Activated CD8-positive, alpha-beta T cell treated with anti-CD3 and anti-CD28 coated beads, Interleukin-2, amount 10 ng/mL, durations not matched to agents 7 days and 5 days (primary cell): ENCODE measurements at regions of chr2 and their contacts with region 1.

Region 1: DNA sequence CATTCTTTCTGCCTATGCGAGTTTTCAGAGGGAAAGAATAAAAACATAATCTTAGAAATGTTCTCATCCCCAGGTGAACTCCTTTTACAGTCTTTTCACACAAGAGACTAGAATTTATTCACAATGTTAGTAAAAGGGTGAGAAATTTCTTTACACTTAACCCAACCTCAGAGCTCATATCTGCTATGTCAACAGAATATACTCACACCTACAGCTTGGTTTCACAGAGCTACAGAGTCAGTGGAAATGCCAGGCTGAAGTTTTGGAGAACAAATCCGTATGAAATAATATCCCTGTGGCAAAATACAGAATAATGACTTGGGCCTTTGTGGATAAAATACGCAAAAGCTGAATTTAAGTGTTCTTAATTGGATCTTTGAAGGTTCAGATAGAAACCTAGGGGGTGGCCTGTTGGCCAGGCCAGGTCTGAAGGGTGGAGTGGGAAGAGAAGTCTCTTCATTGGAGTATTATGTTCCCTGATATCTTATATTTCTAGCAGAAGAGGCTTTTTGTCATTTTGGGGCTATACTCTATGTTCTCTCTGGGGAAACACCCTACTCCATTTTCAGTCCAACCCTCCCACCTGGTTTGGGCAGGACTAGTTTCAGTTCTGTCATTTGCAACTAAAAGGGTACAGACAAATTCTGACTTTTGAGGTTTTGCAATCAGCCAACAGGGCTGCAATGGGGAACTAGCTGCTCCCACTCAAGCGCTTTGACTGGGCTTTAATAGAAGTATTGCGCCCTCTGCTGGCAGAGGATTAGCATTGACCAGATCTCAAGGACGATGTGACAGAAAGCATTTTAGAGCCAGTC is 25.7 kb downstream of the FBXO48 start:
- DNase-seq: peak; percentile 91
- ATAC-seq: peak; percentile 95
- H3K4me3 Mint-ChIP-seq: no peak overlapping the region
- H3K27ac Mint-ChIP-seq: peak overlapping the region; percentile 18
- H3K4me1 Mint-ChIP-seq: peaks cover 10% of the 10 kb centered on the region
- H3K27me3 Mint-ChIP-seq: peaks cover 10% of the 10 kb centered on the region

Region 2: GRCh38 chr2:68167186-68167585 is 274.2 kb before region 1 on chr2:
- CTCF ChIA-PET with region 1: no interaction called
- POLR2A ChIA-PET with region 1: no interaction called
- DNase-seq: peak; percentile 9
- ATAC-seq: no peak
- H3K4me3 Mint-ChIP-seq: no peak overlapping the region
- H3K27ac Mint-ChIP-seq: peak overlapping the region; percentile 2
- H3K4me1 Mint-ChIP-seq: no peaks in the 10 kb centered on the region
- H3K27me3 Mint-ChIP-seq: no peaks in the 10 kb centered on the region

Region 3: DNA sequence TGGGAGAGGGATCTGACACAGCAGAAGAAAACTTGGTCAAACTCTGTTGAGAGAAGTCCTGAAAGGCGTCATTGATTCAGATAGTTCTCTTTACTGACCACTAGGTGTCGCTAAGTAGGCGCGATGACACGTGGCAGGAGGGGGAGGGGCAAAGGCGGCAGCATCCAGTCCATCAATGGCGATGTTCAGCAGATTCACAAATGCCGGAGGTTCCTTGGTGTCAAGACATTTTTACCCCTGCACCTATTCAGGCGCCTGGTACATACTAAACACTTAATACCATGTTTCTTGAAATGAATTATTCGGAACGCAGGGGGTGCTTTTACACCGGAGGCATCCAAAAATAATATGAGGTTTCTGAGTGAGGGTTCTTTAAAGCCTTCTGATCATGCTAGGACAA is 79.3 kb before region 1 on chr2:
- CTCF ChIA-PET with region 1: interaction called, 72 read pairs
- POLR2A ChIA-PET with region 1: interaction called, 3 read pairs
- DNase-seq: peak; percentile 88
- ATAC-seq: peak; percentile 81
- H3K4me3 Mint-ChIP-seq: peak overlapping the region; percentile 19
- H3K27ac Mint-ChIP-seq: peak overlapping the region; percentile 41
- H3K4me1 Mint-ChIP-seq: peaks cover 18% of the 10 kb centered on the region
- H3K27me3 Mint-ChIP-seq: peaks cover 4% of the 10 kb centered on the region

Region 4: GRCh38 chr2:68387408-68388350 is 53.7 kb before region 1 on chr2:
- CTCF ChIA-PET with region 1: interaction called, 22 read pairs
- POLR2A ChIA-PET with region 1: interaction called, 5 read pairs
- DNase-seq: no peak
- ATAC-seq: peak; percentile 69
- H3K4me3 Mint-ChIP-seq: peak overlapping the region; percentile 42
- H3K27ac Mint-ChIP-seq: peak overlapping the region; percentile 84
- H3K4me1 Mint-ChIP-seq: peaks cover 37% of the 10 kb centered on the region
- H3K27me3 Mint-ChIP-seq: peaks cover 13% of the 10 kb centered on the region

Region 5: DNA sequence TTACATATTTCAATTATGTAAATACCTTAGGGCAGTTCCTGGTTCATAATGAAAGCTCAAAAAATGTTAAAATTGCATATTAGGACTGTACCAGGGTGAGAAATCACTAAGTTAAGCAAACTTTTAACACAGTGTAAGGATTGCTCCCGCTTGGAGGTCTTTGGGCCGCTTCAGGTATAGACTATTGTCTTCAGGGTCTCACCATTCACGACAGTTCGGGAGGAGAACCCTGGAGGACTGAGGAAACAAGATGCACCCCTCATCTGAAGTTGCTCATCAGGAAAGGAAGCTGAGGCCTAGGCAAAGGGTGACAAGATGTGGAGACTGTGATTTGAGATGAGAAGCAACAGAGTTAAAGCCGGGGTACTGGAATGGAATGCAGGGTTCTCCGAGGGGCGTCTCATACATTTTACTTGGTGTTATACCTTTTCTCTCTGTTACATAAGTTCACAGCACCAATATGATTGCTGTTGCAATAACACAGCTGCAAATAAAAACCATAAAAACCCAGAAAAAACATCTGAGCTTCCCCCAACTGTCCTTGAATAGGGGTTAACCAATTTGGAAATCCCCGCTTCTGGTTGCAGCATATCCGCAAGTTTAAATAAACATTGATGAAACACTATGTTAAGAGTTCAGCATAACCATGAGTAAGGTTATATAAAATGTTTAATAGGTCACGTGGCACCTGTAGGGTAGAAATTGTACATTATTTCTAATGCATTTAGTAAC is 14.4 kb before region 1 on chr2:
- CTCF ChIA-PET with region 1: interaction called, 48 read pairs
- POLR2A ChIA-PET with region 1: no interaction called
- DNase-seq: no peak
- ATAC-seq: no peak
- H3K4me3 Mint-ChIP-seq: no peak overlapping the region
- H3K27ac Mint-ChIP-seq: peak overlapping the region; percentile 59
- H3K4me1 Mint-ChIP-seq: peaks cover 10% of the 10 kb centered on the region
- H3K27me3 Mint-ChIP-seq: peaks cover 2% of the 10 kb centered on the region